ENCODE measurements at regions of chr15 and their contacts with region 1.

Region 1: DNA sequence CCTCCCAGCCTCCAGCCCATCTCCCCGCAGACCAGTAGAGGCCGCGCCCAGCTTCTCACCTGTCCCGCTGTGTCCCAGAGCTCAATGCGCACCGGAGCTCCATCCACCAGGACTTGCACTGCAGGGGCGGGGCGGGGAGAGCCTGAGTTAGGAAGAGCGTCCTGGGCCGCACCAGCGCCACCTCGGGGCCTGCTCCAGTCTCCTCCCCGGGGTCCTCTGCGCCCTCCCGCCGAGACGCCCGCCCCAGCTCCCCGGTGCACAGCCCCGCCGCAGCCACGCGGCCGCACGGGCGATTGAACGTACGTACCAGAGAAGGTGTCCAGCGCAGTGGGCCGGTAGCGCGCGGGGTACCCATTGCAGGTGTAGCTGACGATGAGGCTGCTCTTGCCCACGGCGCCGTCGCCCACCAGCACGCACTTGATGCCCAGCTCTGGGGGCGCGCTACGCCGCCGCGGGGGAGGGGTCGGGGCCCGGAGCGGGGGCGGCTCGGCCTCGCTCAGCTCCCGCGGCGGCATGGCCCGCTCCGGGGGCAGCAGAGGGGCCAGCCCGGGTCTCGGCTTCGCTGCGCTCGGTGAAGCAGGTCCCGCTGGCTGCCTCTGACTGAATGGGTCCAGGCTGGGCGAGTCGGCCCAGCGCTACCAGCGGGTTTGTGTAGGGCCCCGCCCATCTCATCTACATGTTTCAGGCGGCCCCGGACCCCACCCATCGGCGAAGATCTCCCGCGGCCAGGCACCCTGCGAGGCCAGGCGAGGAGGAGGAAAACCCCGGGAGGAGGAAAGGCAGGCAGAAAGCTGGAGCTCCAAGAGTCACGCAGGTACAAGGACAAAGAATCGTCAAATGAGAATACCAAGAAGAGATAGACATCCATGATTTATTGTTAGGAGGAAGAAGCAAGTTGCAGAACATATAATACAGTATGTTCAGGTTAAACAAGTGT is at the start of gene RHOV:
- DNase-seq: peak in 29 of 35 experiments; percentile 14 to 66 (median 38)
- ATAC-seq: peak; percentile 84 to 90 (median 88)
- H3K4me3 ChIP-seq: peak within 1 kb of the TSS; percentile 47 to 61
- H3K4me3 Mint-ChIP-seq: peak within 1 kb of the TSS; percentile 75 to 84 (median 80)
- H3K27ac ChIP-seq: no peak within 1 kb of the TSS
- H3K27ac Mint-ChIP-seq: peak within 1 kb of the TSS in 1 of 2 donors; percentile 52
- H3K4me1 ChIP-seq: peaks cover 0 to 15% of the 10 kb centered on the region in 2 experiments
- H3K4me1 Mint-ChIP-seq: peaks cover 10 to 12% (median 11%) of the 10 kb centered on the region in 3 donors
- H3K27me3 ChIP-seq: peaks cover 0 to 30% of the 10 kb centered on the region in 2 experiments
- H3K27me3 Mint-ChIP-seq: peaks cover 3 to 6% of the 10 kb centered on the region in 2 donors
- total RNA-seq, gene RHOV: not detected

Region 2: GRCh38 chr15:40799523-40799922 is 74.4 kb before region 1 on chr15:
- CTCF ChIA-PET with region 1: no interaction called
- POLR2A ChIA-PET with region 1: interaction called in 1 of 2 experiments, 15 read pairs
- DNase-seq: no peak
- ATAC-seq: no peak
- H3K4me3 ChIP-seq: no peak overlapping the region
- H3K4me3 Mint-ChIP-seq: no peak overlapping the region
- H3K27ac ChIP-seq: no peak overlapping the region
- H3K27ac Mint-ChIP-seq: no peak overlapping the region
- H3K4me1 ChIP-seq: no peaks in the 10 kb centered on the region
- H3K4me1 Mint-ChIP-seq: peaks cover 38 to 49% (median 44%) of the 10 kb centered on the region in 3 donors
- H3K27me3 ChIP-seq: no peaks in the 10 kb centered on the region
- H3K27me3 Mint-ChIP-seq: no peaks in the 10 kb centered on the region

Region 3: GRCh38 chr15:40847205-40847961 is 26.5 kb before region 1 on chr15:
- CTCF ChIA-PET with region 1: no interaction called
- POLR2A ChIA-PET with region 1: no interaction called
- DNase-seq: peak in 1 of 35 experiments; percentile 44
- ATAC-seq: peak in 1 of 4 experiments; percentile 33
- H3K4me3 ChIP-seq: no peak overlapping the region
- H3K4me3 Mint-ChIP-seq: no peak overlapping the region
- H3K27ac ChIP-seq: no peak overlapping the region
- H3K27ac Mint-ChIP-seq: peak overlapping the region; percentile 16 to 80
- H3K4me1 ChIP-seq: peaks cover 0 to 30% of the 10 kb centered on the region in 2 experiments
- H3K4me1 Mint-ChIP-seq: peaks cover 27 to 33% (median 29%) of the 10 kb centered on the region in 3 donors
- H3K27me3 ChIP-seq: peaks cover 0 to 29% of the 10 kb centered on the region in 2 experiments
- H3K27me3 Mint-ChIP-seq: peaks cover 7% of the 10 kb centered on the region in 2 donors

Region 4: GRCh38 chr15:40911141-40911540 is 37.2 kb after region 1 on chr15:
- CTCF ChIA-PET with region 1: no interaction called
- POLR2A ChIA-PET with region 1: no interaction called
- DNase-seq: no peak
- ATAC-seq: no peak
- H3K4me3 ChIP-seq: no peak overlapping the region
- H3K4me3 Mint-ChIP-seq: no peak overlapping the region
- H3K27ac ChIP-seq: no peak overlapping the region
- H3K27ac Mint-ChIP-seq: peak overlapping the region in 1 of 2 donors; percentile 22
- H3K4me1 ChIP-seq: peaks cover 4 to 21% of the 10 kb centered on the region in 2 experiments
- H3K4me1 Mint-ChIP-seq: peaks cover 10 to 15% (median 14%) of the 10 kb centered on the region in 3 donors
- H3K27me3 ChIP-seq: peaks cover 0 to 6% of the 10 kb centered on the region in 2 experiments
- H3K27me3 Mint-ChIP-seq: no peaks in the 10 kb centered on the region

Region 5: DNA sequence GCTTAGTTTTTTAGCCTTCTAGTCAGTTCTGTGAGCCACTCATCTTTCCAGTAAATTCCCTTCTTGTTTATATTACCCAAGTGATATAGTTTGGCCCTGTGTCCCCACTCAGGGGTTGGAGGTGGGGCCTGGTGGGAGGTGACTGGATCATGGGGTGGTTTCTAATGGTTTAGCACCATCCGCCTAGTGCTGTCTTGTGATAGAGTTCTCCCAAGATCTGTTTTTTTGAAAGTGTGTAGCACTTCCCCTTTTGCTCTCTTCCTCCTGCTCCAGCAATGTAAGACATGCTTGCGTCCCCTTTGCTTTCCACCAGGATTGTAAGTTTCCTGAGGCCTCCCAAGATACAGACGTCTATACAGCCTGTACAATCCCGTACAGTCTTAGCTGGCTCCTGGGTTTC is 295.9 kb after region 1 on chr15:
- CTCF ChIA-PET with region 1: no interaction called
- POLR2A ChIA-PET with region 1: interaction called in 1 of 2 experiments, 10 read pairs
- DNase-seq: no peak
- ATAC-seq: no peak
- H3K4me3 ChIP-seq: no peak overlapping the region
- H3K4me3 Mint-ChIP-seq: no peak overlapping the region
- H3K27ac ChIP-seq: no peak overlapping the region
- H3K27ac Mint-ChIP-seq: no peak overlapping the region
- H3K4me1 ChIP-seq: no peaks in the 10 kb centered on the region
- H3K4me1 Mint-ChIP-seq: no peaks in the 10 kb centered on the region
- H3K27me3 ChIP-seq: no peaks in the 10 kb centered on the region
- H3K27me3 Mint-ChIP-seq: peaks cover 0 to 2% of the 10 kb centered on the region in 2 donors